Activated naive CD4-positive, alpha-beta T cell treated with anti-CD3 and anti-CD28 coated beads for 36 hours (primary cell): ENCODE measurements at regions of chr5 and their contacts with region 1.

Region 1: DNA sequence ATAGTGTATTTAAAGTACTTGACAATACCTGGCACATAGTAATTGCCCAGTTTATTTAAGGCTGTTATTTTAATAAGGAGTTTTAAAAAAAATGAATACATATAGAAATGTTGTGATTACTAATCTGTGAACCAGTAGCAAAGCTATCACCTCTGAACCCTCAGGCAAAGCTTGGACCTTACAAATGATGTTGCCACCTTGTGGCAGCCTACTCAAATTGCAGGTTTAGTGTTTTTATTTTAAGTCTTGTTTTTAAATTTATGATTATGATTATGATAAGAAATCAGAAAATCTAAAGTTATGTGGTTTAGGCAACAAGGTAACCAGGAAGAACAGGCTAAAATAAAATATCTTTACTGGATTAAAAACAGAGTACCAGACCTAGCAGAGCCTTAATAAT is 35.8 kb downstream of the PPARGC1B start:
- DNase-seq: no peak
- H3K4me3 Mint-ChIP-seq: no peak overlapping the region
- H3K27ac Mint-ChIP-seq: no peak overlapping the region
- H3K4me1 Mint-ChIP-seq: no peaks in the 10 kb centered on the region
- H3K27me3 Mint-ChIP-seq: no peaks in the 10 kb centered on the region

Region 2: DNA sequence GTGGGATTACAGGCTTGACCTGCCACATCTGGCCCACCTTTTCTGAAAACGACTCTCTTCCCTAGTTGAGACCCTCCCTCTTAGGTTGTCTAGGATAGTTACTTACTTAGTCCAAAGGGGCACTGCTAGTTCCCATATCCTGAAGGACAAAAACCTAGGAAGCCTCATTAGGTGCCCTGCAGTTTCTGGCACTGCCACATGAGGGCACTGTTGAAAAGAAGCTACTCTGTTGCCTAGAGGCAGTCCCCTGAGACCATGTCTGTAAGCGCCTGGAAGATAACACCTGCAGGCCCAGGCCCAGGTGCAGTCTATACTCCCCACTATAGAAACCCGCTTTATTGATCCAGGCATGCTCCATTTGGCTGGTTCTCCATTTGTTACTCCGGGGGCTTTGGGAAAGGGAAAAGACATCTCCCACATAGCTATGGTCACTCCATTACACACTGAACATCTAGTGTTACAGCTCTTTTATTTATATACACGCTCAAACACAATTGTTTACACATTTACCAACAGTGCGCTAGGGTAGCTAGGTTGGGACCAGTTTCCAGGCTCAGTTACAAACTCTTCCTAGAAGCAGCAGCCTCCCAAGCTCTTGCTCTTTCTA is 109.3 kb before region 1 on chr5:
- CTCF ChIA-PET with region 1: interaction called, 5 read pairs
- intact Hi-C with region 1: loop called (anchors 5 kb)
- DNase-seq: peak; percentile 67
- H3K4me3 Mint-ChIP-seq: no peak overlapping the region
- H3K27ac Mint-ChIP-seq: no peak overlapping the region
- H3K4me1 Mint-ChIP-seq: no peaks in the 10 kb centered on the region
- H3K27me3 Mint-ChIP-seq: peaks cover 5% of the 10 kb centered on the region